Activated naive CD4-positive, alpha-beta T cell treated with anti-CD3 and anti-CD28 coated beads, Interleukin-2, amount 10 ng/mL, durations not matched to agents 7 days and 5 days (primary cell): ENCODE measurements at regions of chr1 and their contacts with region 1.

Region 1: GRCh38 chr1:157984469-157984868 is 9.0 kb upstream of the KIRREL1 start:
- DNase-seq: no peak
- H3K4me3 Mint-ChIP-seq: no peak overlapping the region
- H3K27ac Mint-ChIP-seq: no peak overlapping the region
- H3K4me1 Mint-ChIP-seq: no peaks in the 10 kb centered on the region
- H3K27me3 Mint-ChIP-seq: peaks cover 13% of the 10 kb centered on the region

Region 2: GRCh38 chr1:157969697-157970485 is 14.6 kb before region 1 on chr1:
- CTCF ChIA-PET with region 1: interaction called, 12 read pairs
- DNase-seq: no peak
- H3K4me3 Mint-ChIP-seq: no peak overlapping the region
- H3K27ac Mint-ChIP-seq: no peak overlapping the region
- H3K4me1 Mint-ChIP-seq: no peaks in the 10 kb centered on the region
- H3K27me3 Mint-ChIP-seq: peaks cover 3% of the 10 kb centered on the region